ENCODE measurements at regions of chr5 and their contacts with region 1.

Region 1: DNA sequence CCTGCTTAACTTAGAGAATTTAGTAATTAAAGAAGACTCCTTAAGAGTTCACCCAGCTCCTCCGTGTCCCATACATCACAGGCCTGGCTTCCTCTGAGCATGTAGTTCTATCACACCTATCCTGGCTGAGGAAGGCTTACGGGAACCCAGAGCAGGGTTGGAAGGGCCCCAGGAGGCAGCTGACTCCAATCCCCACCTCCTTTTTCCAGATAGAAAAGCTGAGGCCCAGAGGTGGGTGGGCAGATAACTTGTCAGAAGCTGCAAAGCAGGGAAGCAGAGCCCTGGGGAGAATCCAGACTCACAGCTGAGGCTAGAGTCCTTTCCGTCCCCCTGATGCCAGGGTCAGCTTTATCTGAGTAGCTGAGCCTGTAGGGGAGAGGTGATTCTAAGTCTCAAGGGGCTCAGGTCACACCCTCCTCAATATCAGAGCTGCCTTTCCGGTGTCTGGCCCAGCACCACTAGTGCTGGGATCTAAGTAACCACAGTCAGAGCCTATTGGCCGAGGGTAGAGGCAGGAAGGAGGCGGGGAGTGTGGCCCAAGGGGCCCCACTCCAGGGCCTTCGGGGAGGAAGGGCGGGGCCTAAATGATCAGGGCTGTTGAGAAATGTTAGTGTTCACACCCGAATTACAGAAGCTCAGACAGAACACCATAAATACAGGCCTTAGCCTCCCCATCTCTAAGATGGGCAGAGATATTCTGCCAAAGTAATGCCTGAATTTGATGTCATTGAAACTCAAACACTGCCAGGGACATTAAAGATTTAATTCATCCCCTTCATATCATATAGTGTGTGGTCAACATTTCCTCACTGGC is 9.9 kb downstream of the CCDC69 start:
- DNase-seq: peak; percentile 62
- ATAC-seq: peak; percentile 72
- H3K4me3 Mint-ChIP-seq: peak overlapping the region; percentile 66
- H3K27ac Mint-ChIP-seq: peak overlapping the region; percentile 94
- H3K4me1 Mint-ChIP-seq: peaks cover 96% of the 10 kb centered on the region
- H3K27me3 Mint-ChIP-seq: no peaks in the 10 kb centered on the region
- CTCF ChIP-seq: no peak

Region 2: GRCh38 chr5:151063142-151063949 is 150.7 kb before region 1 on chr5:
- CTCF ChIA-PET with region 1: interaction called, 3 read pairs
- POLR2A ChIA-PET with region 1: interaction called, 5 read pairs
- intact Hi-C with region 1: loop called (anchors 2 kb)
- DNase-seq: no peak
- ATAC-seq: no peak
- H3K4me3 Mint-ChIP-seq: peak overlapping the region; percentile 53
- H3K27ac Mint-ChIP-seq: peak overlapping the region; percentile 89
- H3K4me1 Mint-ChIP-seq: peaks cover 99% of the 10 kb centered on the region
- H3K27me3 Mint-ChIP-seq: no peaks in the 10 kb centered on the region
- CTCF ChIP-seq: no peak

Region 3: GRCh38 chr5:151157426-151158286 is 56.4 kb before region 1 on chr5 and contains the start of gene ANXA6:
- CTCF ChIA-PET with region 1: interaction called, 3 read pairs
- POLR2A ChIA-PET with region 1: interaction called, 7 read pairs
- intact Hi-C with region 1: loop called (anchors 2 kb)
- DNase-seq: peak; percentile 62
- ATAC-seq: peak; percentile 72
- H3K4me3 Mint-ChIP-seq: peak within 1 kb of the TSS; percentile 91
- H3K27ac Mint-ChIP-seq: peak within 1 kb of the TSS; percentile 94
- H3K4me1 Mint-ChIP-seq: peaks cover 77% of the 10 kb centered on the region
- H3K27me3 Mint-ChIP-seq: no peaks in the 10 kb centered on the region
- CTCF ChIP-seq: no peak
- total RNA-seq, gene ANXA6: 367 and 379 TPM in 2 replicates

Region 4: DNA sequence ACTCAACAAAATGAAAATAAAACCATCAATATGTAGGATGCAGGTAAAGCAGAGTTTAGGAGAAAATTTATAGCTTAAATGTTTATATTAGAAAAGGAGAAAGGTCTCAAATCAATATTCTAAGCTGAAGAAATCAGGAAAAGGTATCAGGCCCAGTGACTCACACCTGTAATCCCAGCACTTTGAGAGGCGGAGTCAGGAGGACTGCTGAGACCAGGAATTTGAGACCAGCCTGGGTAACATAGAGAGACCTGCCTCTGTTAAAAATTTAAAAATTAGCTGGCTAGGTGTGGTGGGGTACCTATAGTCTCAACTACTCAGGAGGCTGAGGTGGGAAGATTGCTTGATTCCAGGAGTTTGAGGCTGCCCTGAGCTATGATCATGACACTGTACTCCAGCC is 22.3 kb before region 1 on chr5:
- CTCF ChIA-PET with region 1: no interaction called
- POLR2A ChIA-PET with region 1: interaction called, 43 read pairs
- intact Hi-C with region 1: loop called (anchors 1 kb)
- DNase-seq: no peak
- ATAC-seq: no peak
- H3K4me3 Mint-ChIP-seq: peak overlapping the region; percentile 46
- H3K27ac Mint-ChIP-seq: peak overlapping the region; percentile 76
- H3K4me1 Mint-ChIP-seq: peaks cover 80% of the 10 kb centered on the region
- H3K27me3 Mint-ChIP-seq: no peaks in the 10 kb centered on the region
- CTCF ChIP-seq: no peak

Region 5: GRCh38 chr5:151202381-151203139 is 11.4 kb before region 1 on chr5:
- CTCF ChIA-PET with region 1: interaction called, 4 read pairs
- POLR2A ChIA-PET with region 1: interaction called, 28 read pairs
- intact Hi-C with region 1: no loop called
- DNase-seq: no peak
- ATAC-seq: peak; percentile 77
- H3K4me3 Mint-ChIP-seq: peak overlapping the region; percentile 19
- H3K27ac Mint-ChIP-seq: peak overlapping the region; percentile 56
- H3K4me1 Mint-ChIP-seq: peaks cover 60% of the 10 kb centered on the region
- H3K27me3 Mint-ChIP-seq: no peaks in the 10 kb centered on the region
- CTCF ChIP-seq: no peak

Region 6: DNA sequence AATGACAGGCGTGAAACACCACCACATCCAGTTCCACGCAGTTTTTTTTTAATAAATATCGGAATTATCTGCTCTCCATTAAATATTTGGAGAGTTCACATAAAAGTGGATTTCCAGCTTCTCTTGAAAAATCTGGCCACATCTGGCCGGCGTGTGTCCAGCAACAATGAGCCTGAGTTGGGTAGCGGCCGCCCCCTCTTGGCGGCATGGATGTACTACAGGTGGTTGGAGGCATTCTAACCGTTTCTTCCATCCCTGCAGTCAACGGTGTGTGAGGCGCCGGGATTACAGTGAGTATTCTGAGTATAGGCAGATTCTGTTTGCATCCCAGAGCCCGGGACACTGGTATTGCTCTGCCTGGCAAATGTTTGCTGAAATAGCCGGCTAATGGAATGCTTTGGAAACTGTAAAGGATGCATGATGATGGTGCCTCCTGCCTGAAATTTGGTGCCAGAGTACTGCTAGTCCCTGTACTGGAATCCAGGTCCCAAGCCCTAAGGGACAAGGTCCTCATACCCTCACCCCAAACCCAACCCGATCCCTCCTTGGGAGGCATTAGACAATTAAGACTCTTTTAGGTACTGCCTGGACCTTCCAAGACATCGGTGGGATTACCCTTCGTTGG is 25.3 kb after region 1 on chr5:
- CTCF ChIA-PET with region 1: interaction called, 17 read pairs
- POLR2A ChIA-PET with region 1: interaction called, 104 read pairs
- intact Hi-C with region 1: loop called (anchors 1 kb)
- DNase-seq: peak; percentile 58
- ATAC-seq: peak; percentile 60
- H3K4me3 Mint-ChIP-seq: peak overlapping the region; percentile 77
- H3K27ac Mint-ChIP-seq: peak overlapping the region; percentile 72
- H3K4me1 Mint-ChIP-seq: peaks cover 95% of the 10 kb centered on the region
- H3K27me3 Mint-ChIP-seq: no peaks in the 10 kb centered on the region
- CTCF ChIP-seq: peak; percentile 85

Region 7: DNA sequence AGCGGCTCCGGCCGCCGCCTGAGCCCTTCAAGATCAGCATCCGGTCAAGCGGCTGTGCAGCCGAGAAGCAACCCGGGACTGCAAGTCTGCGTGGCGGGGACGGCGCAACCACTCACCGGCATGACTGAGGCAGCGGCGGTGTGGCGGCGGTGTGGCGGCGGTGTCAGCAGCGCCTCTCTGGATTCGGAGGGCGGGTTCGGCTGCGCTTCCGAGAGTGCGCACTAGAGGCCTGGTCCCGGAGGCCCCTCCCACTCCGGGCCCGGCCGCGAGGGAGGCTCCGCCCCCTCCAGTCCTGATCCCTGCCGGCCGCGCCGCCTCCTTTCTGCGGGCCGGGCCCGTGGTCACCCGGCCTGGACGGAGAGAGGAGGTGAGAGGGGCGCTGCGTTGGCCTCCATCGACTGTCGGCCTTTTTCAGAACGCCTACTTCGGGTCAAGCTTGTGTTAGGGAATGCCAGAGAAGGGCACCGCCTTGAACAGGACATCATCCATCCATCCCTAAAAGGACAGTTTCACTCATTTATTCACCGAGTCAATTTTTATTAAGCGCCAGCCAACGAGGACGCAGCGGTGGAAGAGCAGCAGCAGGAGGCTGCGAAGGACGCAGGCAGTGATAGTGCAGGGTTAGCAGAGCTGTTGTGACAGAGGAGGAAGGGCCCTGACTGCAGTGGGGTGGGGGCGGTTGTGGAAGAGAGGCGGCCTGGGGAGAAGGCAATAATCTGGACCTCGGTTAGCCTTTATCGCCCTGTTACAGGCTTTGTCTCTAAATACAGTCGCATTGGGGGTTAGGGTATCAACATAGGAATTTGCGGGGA is 544.6 kb after region 1 on chr5 and contains the start of gene ATOX1:
- CTCF ChIA-PET with region 1: no interaction called
- POLR2A ChIA-PET with region 1: no interaction called
- intact Hi-C with region 1: loop called (anchors 5 kb)
- DNase-seq: peak; percentile 91
- ATAC-seq: peak; percentile 100
- H3K4me3 Mint-ChIP-seq: peak within 1 kb of the TSS; percentile 89
- H3K27ac Mint-ChIP-seq: peak within 1 kb of the TSS; percentile 84
- H3K4me1 Mint-ChIP-seq: peaks cover 38% of the 10 kb centered on the region
- H3K27me3 Mint-ChIP-seq: no peaks in the 10 kb centered on the region
- CTCF ChIP-seq: no peak
- total RNA-seq, gene ATOX1: 61.2 and 66.6 TPM in 2 replicates

Measured in activated B cell treated with CpG ODN at 0.5 μM for 24 hours (primary cell).